B cell (primary cell): ENCODE measurements at regions of chr2 and their contacts with region 1.

Region 1: DNA sequence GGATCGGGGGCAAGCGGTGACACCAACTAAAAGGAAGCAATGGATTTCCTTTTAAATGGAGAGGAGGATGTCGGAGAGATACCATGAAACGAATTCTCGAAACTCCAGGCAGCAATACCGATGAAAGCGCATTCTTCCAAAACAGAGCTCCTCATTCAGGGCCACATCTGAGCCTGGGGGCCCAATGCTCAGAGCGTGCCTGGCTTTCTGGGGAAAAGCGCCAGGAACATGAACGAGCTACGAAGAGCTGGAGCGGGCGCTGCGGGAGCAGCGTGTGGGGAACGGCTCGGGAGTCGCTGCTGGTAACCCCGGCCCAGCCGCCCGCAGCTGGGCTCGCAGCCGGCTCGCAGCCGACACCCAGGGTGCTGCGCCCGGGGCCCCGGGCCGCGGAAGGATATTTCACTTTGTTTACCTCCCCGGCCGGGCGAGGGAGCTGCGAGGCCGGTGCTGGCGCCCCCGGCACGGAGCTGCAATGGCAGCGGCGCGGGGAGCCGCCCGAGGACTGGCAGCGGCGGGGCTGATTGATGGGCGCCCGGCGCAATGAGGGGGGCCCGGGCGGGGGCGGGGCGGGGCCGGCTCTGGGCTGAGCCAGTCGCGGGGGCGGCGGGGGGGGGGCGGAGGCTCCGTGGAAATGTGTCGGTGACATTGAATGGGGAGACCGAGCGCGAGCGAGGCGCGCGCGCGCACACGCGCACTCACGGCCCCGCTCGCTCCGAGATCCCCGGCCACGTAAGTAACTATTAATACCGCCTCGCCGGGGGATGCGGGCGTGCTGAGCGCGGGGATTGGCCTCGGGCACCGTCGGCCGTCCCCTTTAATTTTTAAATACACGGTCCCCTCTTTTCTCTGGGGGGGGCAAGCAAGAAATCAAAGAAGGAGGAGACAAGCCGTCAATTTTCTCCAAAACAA is at the start of gene TRIB2:
- DNase-seq: peak; percentile 94
- ATAC-seq: peak; percentile 83
- H3K4me3 ChIP-seq: peak within 1 kb of the TSS; percentile 79 to 99 (median 93)
- H3K4me3 Mint-ChIP-seq: peak within 1 kb of the TSS; percentile 93
- H3K27ac ChIP-seq: peak within 1 kb of the TSS; percentile 79 to 89
- H3K27ac Mint-ChIP-seq: peak within 1 kb of the TSS; percentile 92
- H3K4me1 ChIP-seq: peaks cover 31 to 36% of the 10 kb centered on the region in 2 donors
- H3K4me1 Mint-ChIP-seq: peaks cover 47% of the 10 kb centered on the region
- H3K27me3 ChIP-seq: no peaks in the 10 kb centered on the region
- H3K27me3 Mint-ChIP-seq: no peaks in the 10 kb centered on the region
- CTCF ChIP-seq: peak; percentile 63
- total RNA-seq, gene TRIB2: 35.0 and 36.3 TPM in 2 replicates

Region 2: GRCh38 chr2:11688222-11689069 is 1028.1 kb before region 1 on chr2:
- CTCF ChIA-PET with region 1: interaction called, 3 read pairs
- POLR2A ChIA-PET with region 1: no interaction called
- intact Hi-C with region 1: loop called (anchors 5 kb)
- DNase-seq: peak; percentile 89
- ATAC-seq: peak; percentile 83
- H3K4me3 ChIP-seq: peak overlapping the region in 1 of 5 experiments; percentile 17
- H3K4me3 Mint-ChIP-seq: peak overlapping the region; percentile 67
- H3K27ac ChIP-seq: no peak overlapping the region
- H3K27ac Mint-ChIP-seq: no peak overlapping the region
- H3K4me1 ChIP-seq: peaks cover 11 to 16% of the 10 kb centered on the region in 2 donors
- H3K4me1 Mint-ChIP-seq: peaks cover 8% of the 10 kb centered on the region
- H3K27me3 ChIP-seq: peaks cover 0 to 4% (median 0%) of the 10 kb centered on the region in 4 experiments
- H3K27me3 Mint-ChIP-seq: peaks cover 25% of the 10 kb centered on the region
- CTCF ChIP-seq: peak; percentile 85

Region 3: GRCh38 chr2:11863513-11864328 is 852.8 kb before region 1 on chr2:
- CTCF ChIA-PET with region 1: interaction called, 56 read pairs
- POLR2A ChIA-PET with region 1: interaction called, 7 read pairs
- intact Hi-C with region 1: loop called (anchors 2 kb)
- DNase-seq: peak; percentile 80
- ATAC-seq: peak; percentile 73
- H3K4me3 ChIP-seq: peak overlapping the region in 3 of 5 experiments; percentile 5 to 29 (median 26)
- H3K4me3 Mint-ChIP-seq: peak overlapping the region; percentile 73
- H3K27ac ChIP-seq: no peak overlapping the region
- H3K27ac Mint-ChIP-seq: peak overlapping the region; percentile 59
- H3K4me1 ChIP-seq: peaks cover 70 to 81% of the 10 kb centered on the region in 2 donors
- H3K4me1 Mint-ChIP-seq: peaks cover 87% of the 10 kb centered on the region
- H3K27me3 ChIP-seq: no peaks in the 10 kb centered on the region
- H3K27me3 Mint-ChIP-seq: no peaks in the 10 kb centered on the region
- CTCF ChIP-seq: peak; percentile 96

Region 4: DNA sequence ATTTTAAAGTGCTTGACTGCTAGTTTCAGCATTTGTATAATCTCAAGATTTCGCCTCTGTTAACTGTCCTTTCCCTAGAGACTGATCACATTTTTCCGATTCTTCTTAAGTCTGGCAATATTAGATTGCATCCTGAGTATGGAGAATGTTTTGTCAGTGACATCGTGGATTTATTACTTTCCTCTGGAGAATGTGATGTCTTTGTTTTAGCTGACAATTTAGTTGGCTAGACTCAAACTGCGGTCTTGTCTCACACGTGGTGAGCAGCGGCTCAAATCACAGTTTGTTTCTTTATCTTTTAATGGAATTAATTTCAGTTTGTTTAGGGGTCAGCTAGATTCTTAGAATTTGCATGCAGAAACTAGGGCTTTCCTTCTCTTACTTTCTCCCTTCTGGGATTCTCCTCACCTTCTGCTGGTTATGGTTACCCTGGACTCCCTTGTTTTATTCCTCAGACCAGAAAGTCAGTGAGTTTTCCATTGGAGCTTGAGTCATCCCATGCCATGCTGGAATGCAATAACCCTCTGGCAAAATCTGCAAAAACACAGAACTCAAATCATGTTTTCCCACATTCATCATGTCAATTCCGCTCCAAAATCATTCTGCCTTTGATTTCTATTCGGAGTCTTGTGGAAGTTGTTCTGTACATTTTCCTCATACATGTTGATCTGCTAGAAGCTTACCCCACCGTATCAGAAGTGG is 327.0 kb before region 1 on chr2:
- CTCF ChIA-PET with region 1: no interaction called
- POLR2A ChIA-PET with region 1: no interaction called
- intact Hi-C with region 1: no loop called
- DNase-seq: no peak
- ATAC-seq: no peak
- H3K4me3 ChIP-seq: no peak overlapping the region
- H3K4me3 Mint-ChIP-seq: no peak overlapping the region
- H3K27ac ChIP-seq: no peak overlapping the region
- H3K27ac Mint-ChIP-seq: no peak overlapping the region
- H3K4me1 ChIP-seq: no peaks in the 10 kb centered on the region
- H3K4me1 Mint-ChIP-seq: no peaks in the 10 kb centered on the region
- H3K27me3 ChIP-seq: no peaks in the 10 kb centered on the region
- H3K27me3 Mint-ChIP-seq: no peaks in the 10 kb centered on the region
- CTCF ChIP-seq: no peak

Region 5: DNA sequence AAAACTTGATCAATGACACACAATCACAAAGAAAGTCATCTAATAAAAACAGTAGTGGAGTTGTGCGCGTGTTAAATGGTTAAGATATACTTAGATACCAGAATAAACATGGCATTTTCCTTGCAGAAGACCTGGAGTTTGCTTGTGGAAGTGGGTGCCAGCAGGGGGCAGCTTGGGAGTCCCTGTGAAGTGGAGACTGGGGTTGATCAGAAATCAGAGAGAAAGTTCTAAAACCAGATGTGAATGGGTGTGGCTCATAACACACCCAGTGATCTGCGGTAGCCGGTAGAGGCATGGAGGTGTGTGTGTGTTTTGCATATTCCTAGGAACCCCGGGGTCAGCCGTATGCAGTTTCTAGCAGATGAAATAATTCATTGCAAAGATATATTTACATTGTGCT is 299.9 kb before region 1 on chr2:
- CTCF ChIA-PET with region 1: interaction called, 32 read pairs
- POLR2A ChIA-PET with region 1: no interaction called
- intact Hi-C with region 1: loop called (anchors 1 kb)
- DNase-seq: peak; percentile 65
- ATAC-seq: peak; percentile 64
- H3K4me3 ChIP-seq: no peak overlapping the region
- H3K4me3 Mint-ChIP-seq: peak overlapping the region; percentile 11
- H3K27ac ChIP-seq: no peak overlapping the region
- H3K27ac Mint-ChIP-seq: no peak overlapping the region
- H3K4me1 ChIP-seq: peaks cover 16 to 24% of the 10 kb centered on the region in 2 donors
- H3K4me1 Mint-ChIP-seq: peaks cover 34% of the 10 kb centered on the region
- H3K27me3 ChIP-seq: no peaks in the 10 kb centered on the region
- H3K27me3 Mint-ChIP-seq: no peaks in the 10 kb centered on the region
- CTCF ChIP-seq: no peak

Region 6: DNA sequence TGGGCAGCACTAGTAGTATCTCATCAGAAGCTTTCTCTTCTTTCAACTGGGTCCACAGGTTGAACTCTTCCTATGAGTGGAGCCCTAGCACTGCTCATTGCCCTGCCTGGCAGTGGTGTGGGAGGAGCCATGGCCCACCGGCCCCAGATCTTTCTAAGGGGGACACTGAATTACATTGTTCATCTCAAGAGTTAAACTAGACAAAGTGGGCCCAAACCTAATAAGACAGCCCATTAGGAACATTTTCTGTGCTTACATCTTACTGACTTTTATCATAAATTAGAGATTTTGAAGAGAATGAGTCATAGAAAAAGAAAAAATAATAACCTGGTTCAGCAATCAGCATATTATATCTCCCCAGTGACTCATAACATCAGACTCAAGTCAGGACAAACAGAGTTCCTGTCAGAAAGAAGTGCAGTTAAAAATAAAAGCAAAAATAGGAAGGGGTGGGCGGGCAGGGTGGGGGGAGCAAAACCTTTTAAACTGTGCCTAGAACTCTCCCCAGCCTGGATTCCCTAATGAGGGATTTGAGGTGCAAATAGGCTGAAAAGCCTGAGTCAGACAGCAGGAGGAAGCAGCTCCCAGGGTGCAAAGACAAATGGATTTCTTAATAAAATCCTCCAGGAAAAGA is 161.4 kb before region 1 on chr2:
- CTCF ChIA-PET with region 1: interaction called, 18 read pairs
- POLR2A ChIA-PET with region 1: no interaction called
- intact Hi-C with region 1: loop called (anchors 5 kb)
- DNase-seq: no peak
- ATAC-seq: peak; percentile 60
- H3K4me3 ChIP-seq: no peak overlapping the region
- H3K4me3 Mint-ChIP-seq: peak overlapping the region; percentile 60
- H3K27ac ChIP-seq: no peak overlapping the region
- H3K27ac Mint-ChIP-seq: peak overlapping the region; percentile 69
- H3K4me1 ChIP-seq: peaks cover 23 to 32% of the 10 kb centered on the region in 2 donors
- H3K4me1 Mint-ChIP-seq: peaks cover 45% of the 10 kb centered on the region
- H3K27me3 ChIP-seq: no peaks in the 10 kb centered on the region
- H3K27me3 Mint-ChIP-seq: no peaks in the 10 kb centered on the region
- CTCF ChIP-seq: no peak

Region 7: GRCh38 chr2:12931186-12931844 is 214.8 kb after region 1 on chr2:
- CTCF ChIA-PET with region 1: interaction called, 71 read pairs
- POLR2A ChIA-PET with region 1: interaction called, 8 read pairs
- intact Hi-C with region 1: loop called (anchors 1 kb)
- DNase-seq: peak; percentile 46
- ATAC-seq: no peak
- H3K4me3 ChIP-seq: no peak overlapping the region
- H3K4me3 Mint-ChIP-seq: no peak overlapping the region
- H3K27ac ChIP-seq: no peak overlapping the region
- H3K27ac Mint-ChIP-seq: no peak overlapping the region
- H3K4me1 ChIP-seq: peaks cover 0 to 9% of the 10 kb centered on the region in 2 donors
- H3K4me1 Mint-ChIP-seq: peaks cover 13% of the 10 kb centered on the region
- H3K27me3 ChIP-seq: no peaks in the 10 kb centered on the region
- H3K27me3 Mint-ChIP-seq: peaks cover 7% of the 10 kb centered on the region
- CTCF ChIP-seq: peak; percentile 87